ENCODE measurements at regions of chr9 and their contacts with region 1.

Region 1: DNA sequence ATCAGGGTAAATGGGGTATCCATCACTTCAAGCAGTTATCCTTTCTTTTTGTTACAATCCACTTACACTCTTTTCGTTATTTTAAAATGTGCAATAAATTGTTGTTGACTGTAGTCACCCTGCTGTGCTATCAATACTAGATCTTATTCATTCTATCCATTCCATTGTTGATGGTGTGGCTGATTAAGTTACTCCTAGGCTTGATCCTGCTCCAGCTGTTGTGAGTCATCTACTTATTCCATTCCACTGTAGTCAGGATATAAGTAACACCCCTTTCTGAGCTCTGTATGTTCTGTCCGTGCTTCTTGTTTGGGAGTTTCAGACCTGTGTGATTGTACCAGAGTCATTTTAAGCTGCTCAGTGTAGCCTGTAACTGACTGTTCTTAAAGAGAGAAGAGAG is 122.5 kb upstream of the RUSC2 start:
- DNase-seq: peak; percentile 91
- H3K4me3 ChIP-seq: no peak overlapping the region
- H3K27ac ChIP-seq: peak overlapping the region; percentile 64
- H3K4me1 ChIP-seq: peaks cover 31% of the 10 kb centered on the region
- H3K27me3 ChIP-seq: no peaks in the 10 kb centered on the region
- CTCF ChIP-seq: no peak
- POLR2A ChIP-seq: no peak

Region 2: DNA sequence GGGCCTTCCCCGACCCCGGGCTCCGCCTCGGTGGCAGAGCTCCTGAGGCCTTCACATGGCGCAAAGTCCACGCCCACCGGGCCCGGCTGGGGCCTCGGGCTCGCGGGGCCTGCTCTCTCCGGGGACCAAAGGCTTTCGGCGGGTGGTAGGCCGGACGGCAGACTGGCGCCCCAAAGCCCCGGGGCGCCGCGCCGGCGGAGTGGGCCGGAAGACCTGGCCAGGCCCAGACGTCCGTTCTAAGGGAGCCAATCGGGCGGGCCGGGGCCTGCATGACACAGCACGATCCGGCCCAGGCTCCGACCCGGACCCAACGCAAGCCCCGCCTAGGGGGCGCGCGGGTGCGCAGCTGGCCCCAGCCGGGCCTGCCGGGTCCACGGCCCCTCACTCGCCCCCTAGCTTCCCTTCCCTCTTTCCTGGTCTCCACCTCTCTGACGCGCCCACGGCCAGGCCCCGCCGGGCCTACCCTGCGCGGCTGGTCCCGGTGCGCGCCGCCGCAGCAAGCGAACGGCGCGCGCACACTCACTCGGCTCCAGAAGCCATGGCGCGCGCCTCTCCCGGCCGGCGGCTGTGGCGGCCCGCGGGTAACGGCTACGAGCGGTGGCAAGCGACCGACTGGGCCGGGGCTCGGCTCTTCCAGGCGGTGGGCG is 295.5 kb before region 1 on chr9:
- CTCF ChIA-PET with region 1: no interaction called
- POLR2A ChIA-PET with region 1: interaction called, 15 read pairs
- dilution Hi-C with region 1: no loop called
- intact Hi-C with region 1: no loop called
- DNase-seq: peak; percentile 85
- H3K4me3 ChIP-seq: peak overlapping the region; percentile 79 to 97 (median 96)
- H3K27ac ChIP-seq: peak overlapping the region; percentile 95
- H3K4me1 ChIP-seq: peaks cover 29% of the 10 kb centered on the region
- H3K27me3 ChIP-seq: no peaks in the 10 kb centered on the region
- CTCF ChIP-seq: peak; percentile 25 to 65
- POLR2A ChIP-seq: peak; percentile 51

Region 3: DNA sequence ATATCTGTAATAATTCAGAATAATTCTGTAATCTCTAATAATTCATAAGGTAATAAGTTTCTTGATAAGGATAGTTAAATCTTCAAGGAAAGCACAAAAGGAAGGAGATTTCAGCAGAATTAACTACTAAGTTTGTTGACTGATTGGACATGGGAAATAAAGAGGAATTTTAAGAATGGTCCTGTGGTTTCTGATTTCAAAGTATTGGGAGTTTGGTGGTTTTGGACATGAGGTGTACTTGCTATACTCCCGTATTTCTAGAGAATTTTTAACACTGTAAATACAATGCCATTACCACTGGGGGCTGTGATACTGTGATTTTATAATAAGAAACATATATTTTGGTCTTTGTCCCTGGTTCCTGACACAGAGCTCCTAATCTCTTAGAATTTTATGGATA is 81.7 kb before region 1 on chr9:
- CTCF ChIA-PET with region 1: no interaction called
- POLR2A ChIA-PET with region 1: no interaction called
- dilution Hi-C with region 1: no loop called
- intact Hi-C with region 1: no loop called
- DNase-seq: no peak
- H3K4me3 ChIP-seq: no peak overlapping the region
- H3K27ac ChIP-seq: no peak overlapping the region
- H3K4me1 ChIP-seq: peaks cover 8% of the 10 kb centered on the region
- H3K27me3 ChIP-seq: no peaks in the 10 kb centered on the region
- CTCF ChIP-seq: no peak
- POLR2A ChIP-seq: no peak

Region 4: GRCh38 chr9:35341585-35341984 is 25.9 kb before region 1 on chr9:
- CTCF ChIA-PET with region 1: interaction called, 4 read pairs
- POLR2A ChIA-PET with region 1: no interaction called
- dilution Hi-C with region 1: no loop called
- intact Hi-C with region 1: loop called (anchors 2 kb)
- DNase-seq: peak; percentile 94
- H3K4me3 ChIP-seq: peak overlapping the region in 1 of 3 experiments; percentile 5
- H3K27ac ChIP-seq: peak overlapping the region; percentile 57
- H3K4me1 ChIP-seq: peaks cover 20% of the 10 kb centered on the region
- H3K27me3 ChIP-seq: no peaks in the 10 kb centered on the region
- CTCF ChIP-seq: no peak
- POLR2A ChIP-seq: no peak

Measured in endothelial cell of umbilical vein (primary cell).